Heart right ventricle (tissue), 16 donors: ENCODE measurements at regions of chr1 and their contacts with region 1.

Region 1: DNA sequence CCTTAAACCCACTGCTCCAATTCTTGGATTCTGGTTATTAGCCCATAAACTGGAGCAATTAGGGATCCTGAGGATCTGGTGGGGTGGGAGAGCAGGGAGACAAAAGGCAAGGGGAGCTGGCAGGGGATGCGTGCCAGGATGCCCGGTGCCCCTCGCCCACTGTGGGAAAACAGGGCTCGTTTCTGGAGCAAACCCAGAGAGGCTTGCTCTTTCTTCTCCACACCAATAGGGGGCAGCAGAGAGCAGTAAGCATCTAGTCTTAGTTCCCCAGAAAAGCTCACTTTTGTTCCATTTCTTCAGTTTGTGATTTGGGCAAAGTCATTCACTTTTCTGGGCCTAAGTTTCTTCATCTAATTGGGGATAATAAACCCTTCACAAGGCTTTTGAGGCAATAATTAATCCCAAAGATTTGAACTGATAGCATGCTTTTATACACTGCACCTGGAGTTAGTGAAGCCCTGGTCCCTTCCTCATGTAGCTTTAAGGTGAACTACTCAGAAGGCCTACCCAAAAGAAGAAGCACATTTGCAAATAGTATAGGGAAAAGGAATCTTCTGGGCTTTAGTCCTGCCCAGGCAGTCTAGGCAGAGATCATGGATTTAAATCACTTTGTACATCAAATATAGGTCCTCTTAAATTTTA is 160.6 kb upstream of the USP24 start:
- DNase-seq: peak in 1 of 2 donors; percentile 62
- ATAC-seq: peak in 4 of 8 donors; percentile 10 to 63 (median 48)
- H3K4me3 ChIP-seq: no peak overlapping the region
- H3K27ac ChIP-seq: no peak overlapping the region
- H3K4me1 ChIP-seq: peaks cover 0 to 14% (median 0%) of the 10 kb centered on the region in 9 donors
- H3K27me3 ChIP-seq: no peaks in the 10 kb centered on the region
- CTCF ChIP-seq: peak; percentile 89 to 99 (median 92)

Region 2: GRCh38 chr1:55318116-55318817 is 57.5 kb before region 1 on chr1:
- intact Hi-C with region 1: no loop called
- DNase-seq: peak in 1 of 2 donors; percentile 54
- ATAC-seq: peak; percentile 38 to 89 (median 80)
- H3K4me3 ChIP-seq: no peak overlapping the region
- H3K27ac ChIP-seq: peak overlapping the region in 6 of 10 donors; percentile 10 to 76 (median 53)
- H3K4me1 ChIP-seq: peaks cover 0 to 40% (median 18%) of the 10 kb centered on the region in 9 donors
- H3K27me3 ChIP-seq: no peaks in the 10 kb centered on the region
- CTCF ChIP-seq: no peak

Region 3: GRCh38 chr1:55893155-55893554 is 517.4 kb after region 1 on chr1:
- intact Hi-C with region 1: loop called in 1 of 10 experiments (anchors 10 kb)
- DNase-seq: no peak
- ATAC-seq: no peak
- H3K4me3 ChIP-seq: no peak overlapping the region
- H3K27ac ChIP-seq: no peak overlapping the region
- H3K4me1 ChIP-seq: peaks cover 0 to 3% (median 0%) of the 10 kb centered on the region in 9 donors
- H3K27me3 ChIP-seq: no peaks in the 10 kb centered on the region
- CTCF ChIP-seq: peak in 5 of 9 donors; percentile 19 to 32 (median 30)

Region 4: GRCh38 chr1:56416471-56416882 is 1040.7 kb after region 1 on chr1:
- intact Hi-C with region 1: loop called in 1 of 10 experiments (anchors 5 kb)
- DNase-seq: no peak
- ATAC-seq: no peak
- H3K4me3 ChIP-seq: no peak overlapping the region
- H3K27ac ChIP-seq: no peak overlapping the region
- H3K4me1 ChIP-seq: peaks cover 5 to 66% (median 15%) of the 10 kb centered on the region in 9 donors
- H3K27me3 ChIP-seq: no peaks in the 10 kb centered on the region
- CTCF ChIP-seq: no peak